ENCODE measurements at regions of chr1 and their contacts with region 1.

Region 1: DNA sequence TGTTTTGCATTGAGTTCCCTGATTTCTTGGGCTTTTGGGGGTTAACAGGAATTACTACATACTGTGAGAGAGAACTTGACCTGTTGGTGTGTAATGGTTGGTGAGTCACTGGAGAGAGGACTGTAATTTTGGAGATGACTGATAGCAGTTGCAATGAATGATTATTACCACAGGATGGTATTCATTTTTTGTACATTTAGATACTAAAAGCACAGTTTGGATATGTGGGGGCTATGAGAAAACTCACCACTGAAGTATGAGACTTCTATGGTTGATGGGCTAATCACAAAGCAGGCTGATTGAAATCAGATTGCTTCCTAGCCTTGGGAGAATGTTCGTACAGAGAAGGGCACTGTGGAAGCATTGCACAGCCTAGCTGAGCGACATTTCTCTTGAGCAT is 1571.3 kb upstream of the PRMT6 start:
- DNase-seq: no peak
- ATAC-seq: no peak
- H3K4me3 ChIP-seq: no peak overlapping the region
- H3K4me3 Mint-ChIP-seq: no peak overlapping the region
- H3K27ac ChIP-seq: no peak overlapping the region
- H3K27ac Mint-ChIP-seq: no peak overlapping the region
- H3K4me1 ChIP-seq: no peaks in the 10 kb centered on the region
- H3K4me1 Mint-ChIP-seq: no peaks in the 10 kb centered on the region
- H3K27me3 ChIP-seq: no peaks in the 10 kb centered on the region
- H3K27me3 Mint-ChIP-seq: no peaks in the 10 kb centered on the region
- CTCF ChIP-seq: no peak

Region 2: DNA sequence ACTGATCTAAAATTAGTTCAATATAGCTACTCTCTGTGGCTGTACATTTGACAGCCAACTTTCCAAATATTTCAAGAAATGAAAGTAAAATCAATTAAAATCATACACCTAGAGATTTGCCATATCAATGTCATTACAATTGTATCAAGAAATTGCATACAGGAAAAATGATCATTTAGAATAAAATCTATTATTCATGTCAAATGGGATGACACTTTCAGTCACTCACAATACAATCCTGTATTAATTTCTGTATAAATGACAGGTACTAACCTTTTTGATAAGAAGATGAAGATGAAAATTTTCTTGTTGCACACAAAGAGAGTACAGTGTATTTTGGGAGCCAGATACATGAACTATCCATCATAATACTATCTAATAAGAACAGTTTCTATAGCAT is 17.7 kb before region 1 on chr1:
- CTCF ChIA-PET with region 1: no interaction called
- POLR2A ChIA-PET with region 1: no interaction called
- intact Hi-C with region 1: loop called (anchors 1 kb)
- DNase-seq: no peak
- ATAC-seq: no peak
- H3K4me3 ChIP-seq: no peak overlapping the region
- H3K4me3 Mint-ChIP-seq: no peak overlapping the region
- H3K27ac ChIP-seq: no peak overlapping the region
- H3K27ac Mint-ChIP-seq: no peak overlapping the region
- H3K4me1 ChIP-seq: no peaks in the 10 kb centered on the region
- H3K4me1 Mint-ChIP-seq: no peaks in the 10 kb centered on the region
- H3K27me3 ChIP-seq: no peaks in the 10 kb centered on the region
- H3K27me3 Mint-ChIP-seq: no peaks in the 10 kb centered on the region
- CTCF ChIP-seq: no peak

Measured in CD4-positive, alpha-beta T cell (primary cell).